ENCODE measurements at regions of chr18 and their contacts with region 1.

Region 1: DNA sequence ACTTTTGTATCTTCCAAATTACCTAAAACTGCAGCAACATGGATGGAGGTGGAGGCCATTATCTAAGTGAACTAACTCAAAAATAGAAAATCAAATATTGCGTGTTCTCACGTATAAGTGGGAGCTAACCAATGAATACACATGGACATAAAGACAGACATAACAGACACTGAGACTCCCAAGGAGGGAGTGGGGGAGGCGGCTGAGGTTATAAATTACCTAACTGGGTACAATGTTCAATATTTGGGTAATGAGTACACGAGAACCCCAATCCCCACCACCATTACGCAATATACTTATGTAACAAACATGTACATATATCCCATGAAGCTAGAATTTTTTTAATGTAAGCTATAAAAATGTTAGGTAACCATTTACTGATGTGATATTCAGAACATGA is 119.8 kb downstream of the RTTN start:
- DNase-seq: no peak
- H3K4me3 Mint-ChIP-seq: no peak overlapping the region
- H3K27ac Mint-ChIP-seq: no peak overlapping the region
- H3K4me1 Mint-ChIP-seq: no peaks in the 10 kb centered on the region
- H3K27me3 Mint-ChIP-seq: no peaks in the 10 kb centered on the region

Region 2: DNA sequence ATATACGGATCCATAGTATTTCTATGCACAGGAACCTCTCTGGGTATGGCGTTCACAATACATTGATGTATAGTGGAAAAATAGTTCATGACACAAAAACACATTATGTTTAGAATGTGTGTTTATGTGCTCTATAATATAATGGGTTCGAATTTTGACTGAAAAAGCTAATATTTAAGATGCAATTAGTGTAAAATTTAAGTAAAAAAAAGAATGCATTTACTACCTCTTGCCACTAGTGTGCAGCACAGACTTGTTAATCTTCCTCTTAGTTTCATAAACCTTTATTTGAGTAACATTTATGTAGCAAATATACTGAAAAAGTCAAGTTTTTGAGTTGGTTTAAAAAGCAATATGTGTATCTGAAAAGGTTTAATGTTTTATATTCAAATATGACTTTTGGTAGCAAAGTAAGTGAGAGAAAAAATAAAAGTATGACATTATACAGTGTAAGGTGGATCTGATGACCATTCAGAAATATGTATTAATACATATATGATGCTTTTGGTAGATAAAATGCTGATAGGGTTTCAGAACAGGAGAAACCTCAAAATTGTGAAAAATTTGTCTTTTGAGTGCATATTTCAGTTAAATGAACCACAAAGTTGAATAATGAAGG is 1238.3 kb before region 1 on chr18:
- intact Hi-C with region 1: loop called (anchors 5 kb)
- DNase-seq: no peak
- H3K4me3 Mint-ChIP-seq: no peak overlapping the region
- H3K27ac Mint-ChIP-seq: no peak overlapping the region
- H3K4me1 Mint-ChIP-seq: no peaks in the 10 kb centered on the region
- H3K27me3 Mint-ChIP-seq: no peaks in the 10 kb centered on the region

Region 3: DNA sequence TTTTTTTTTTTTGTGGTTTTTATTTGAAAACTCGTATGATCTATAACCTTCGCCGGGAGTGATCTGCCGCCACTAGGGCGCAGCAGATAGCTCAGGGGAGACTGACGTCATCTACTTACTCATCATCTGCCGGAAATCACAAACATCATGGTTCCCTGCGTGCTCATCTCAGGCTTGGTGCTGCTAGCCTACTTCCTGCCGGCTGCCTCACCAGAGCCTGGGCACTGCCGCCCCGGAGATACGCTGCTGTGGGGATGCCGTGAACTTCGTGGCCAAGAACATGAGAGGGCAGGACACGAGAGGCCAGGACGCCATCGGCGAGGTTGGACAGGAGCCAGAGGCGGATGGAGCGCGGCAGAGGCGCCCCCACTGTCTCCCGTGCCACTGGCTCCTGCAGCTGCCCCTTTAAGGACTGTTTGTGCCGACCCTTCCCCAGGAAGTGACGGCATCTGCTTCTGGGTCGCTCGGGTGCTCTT is 616.2 kb before region 1 on chr18:
- intact Hi-C with region 1: loop called (anchors 5 kb)
- DNase-seq: peak; percentile 70
- H3K4me3 Mint-ChIP-seq: no peak overlapping the region
- H3K27ac Mint-ChIP-seq: no peak overlapping the region
- H3K4me1 Mint-ChIP-seq: no peaks in the 10 kb centered on the region
- H3K27me3 Mint-ChIP-seq: no peaks in the 10 kb centered on the region

Region 4: GRCh38 chr18:69636529-69637301 is 448.9 kb before region 1 on chr18:
- intact Hi-C with region 1: loop called (anchors 1 kb)
- DNase-seq: peak; percentile 71
- H3K4me3 Mint-ChIP-seq: no peak overlapping the region
- H3K27ac Mint-ChIP-seq: no peak overlapping the region
- H3K4me1 Mint-ChIP-seq: no peaks in the 10 kb centered on the region
- H3K27me3 Mint-ChIP-seq: peaks cover 6% of the 10 kb centered on the region

Region 5: DNA sequence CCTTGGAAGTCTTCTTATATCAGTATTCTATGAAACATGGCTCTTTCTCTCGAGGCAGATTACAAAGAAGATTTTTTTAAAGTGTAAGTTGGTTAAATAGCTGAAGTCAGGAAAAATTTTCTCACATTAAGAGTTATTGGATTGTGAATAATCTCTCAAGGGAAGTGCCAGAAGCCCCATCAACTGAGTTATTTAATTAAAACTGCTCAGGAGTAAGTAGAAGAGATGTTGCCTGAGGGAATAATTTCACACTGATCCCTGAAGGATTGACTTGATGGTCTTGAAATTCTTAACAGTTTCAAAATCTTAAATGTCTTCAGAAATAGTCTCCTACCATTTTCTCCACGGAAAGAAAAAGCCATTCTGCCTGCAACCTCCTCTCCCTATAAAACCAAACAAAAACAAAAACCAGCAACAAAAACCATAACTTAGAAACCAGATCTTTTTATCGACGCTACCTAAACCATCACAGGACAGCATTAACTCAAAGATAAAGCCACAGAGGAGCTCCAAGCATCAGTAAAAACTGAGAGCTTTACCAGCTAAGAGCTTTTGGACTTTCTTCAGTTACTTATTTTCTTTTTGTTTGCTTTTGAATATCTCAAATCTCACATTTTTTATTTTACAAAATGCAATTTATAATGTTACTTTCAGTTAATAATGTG is 150.9 kb before region 1 on chr18:
- intact Hi-C with region 1: no loop called
- DNase-seq: peak; percentile 54
- H3K4me3 Mint-ChIP-seq: no peak overlapping the region
- H3K27ac Mint-ChIP-seq: no peak overlapping the region
- H3K4me1 Mint-ChIP-seq: peaks cover 25% of the 10 kb centered on the region
- H3K27me3 Mint-ChIP-seq: peaks cover 2% of the 10 kb centered on the region

Measured in activated CD4-positive, alpha-beta T cell treated with anti-CD3 and anti-CD28 coated beads, Interleukin-2, amount 10 ng/mL, durations not matched to agents 24 days and 14 days (primary cell).